Posterior cingulate gyrus (tissue), 11 donors: ENCODE measurements at regions of chr15 and their contacts with region 1.

Region 1: GRCh38 chr15:89874926-89875564 is 18.7 kb downstream of the AP3S2 start:
- DNase-seq: peak; percentile 73 to 98 (median 85)

Region 2: DNA sequence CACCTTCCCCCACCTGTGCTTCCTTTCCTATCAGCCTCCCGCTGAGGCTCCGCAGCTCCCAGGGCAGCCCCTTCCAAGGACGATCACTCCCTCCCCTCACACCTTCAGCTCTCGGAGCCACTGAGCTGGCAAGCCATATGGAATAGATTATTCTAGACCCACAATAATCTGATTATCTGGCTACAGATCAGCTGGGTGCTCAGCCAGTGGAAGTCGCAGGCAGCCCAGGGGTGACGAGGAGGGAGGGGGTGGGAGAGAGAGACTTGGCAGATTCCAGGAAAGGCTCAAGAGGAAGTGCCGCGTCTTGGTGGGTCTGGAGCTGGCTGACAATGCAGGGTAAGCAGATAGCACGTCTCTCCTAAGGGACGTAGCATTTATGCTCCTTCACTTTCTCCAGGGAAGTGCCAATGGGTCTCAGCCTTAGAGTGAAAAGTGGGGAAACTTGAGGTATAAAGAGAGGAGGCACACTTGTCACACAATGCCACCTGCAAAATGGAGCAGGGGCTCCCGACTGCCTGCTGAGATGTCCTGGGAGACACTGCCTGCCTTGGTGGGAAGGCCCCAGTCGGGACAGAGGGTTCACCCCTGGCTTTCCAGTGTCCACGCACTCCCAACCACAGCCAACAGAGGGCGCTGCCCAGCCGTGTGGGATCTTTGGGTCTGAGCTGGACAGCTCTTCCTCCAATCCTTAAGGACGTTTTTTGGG is 114.6 kb before region 1 on chr15:
- intact Hi-C with region 1: loop called (anchors 1 kb)
- DNase-seq: peak; percentile 61 to 96 (median 78)